Transverse colon (tissue), 4 donors: ENCODE measurements at regions of chr7 and their contacts with region 1.

Region 1: DNA sequence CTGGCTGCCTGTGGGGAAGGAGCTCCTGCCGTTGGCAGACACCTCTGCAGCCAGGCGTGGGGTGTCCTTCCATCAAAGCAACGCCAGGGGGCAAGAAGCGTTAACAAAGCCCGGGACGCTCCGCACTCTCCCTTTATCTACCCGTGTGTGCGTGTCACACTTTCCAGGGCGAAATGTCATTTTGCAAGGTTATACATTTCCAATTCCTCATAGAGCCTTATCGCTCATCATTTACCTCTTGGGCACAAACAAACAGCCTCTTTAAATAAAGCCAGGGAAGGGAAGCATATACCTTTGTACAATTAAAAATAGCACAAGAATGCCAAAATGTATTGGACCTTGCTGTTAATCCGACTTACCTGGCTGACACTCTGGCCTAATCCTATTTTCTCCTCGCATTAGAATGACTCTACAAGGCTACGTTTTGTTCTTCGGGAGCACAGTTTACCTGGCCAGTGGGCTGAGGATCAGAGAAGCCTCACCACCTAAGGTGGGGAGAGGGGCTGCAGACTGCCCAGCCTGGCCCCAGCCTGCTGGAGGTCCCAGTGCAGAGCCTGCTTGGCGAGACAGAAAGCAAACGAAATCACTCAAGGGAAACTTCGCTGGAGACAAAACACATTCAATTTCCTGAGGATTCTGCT is 77.6 kb upstream of the EN2 start:
- DNase-seq: peak; percentile 74
- H3K4me3 ChIP-seq: no peak overlapping the region
- H3K27ac ChIP-seq: no peak overlapping the region
- H3K4me1 ChIP-seq: peaks cover 14 to 59% (median 36%) of the 10 kb centered on the region in 4 donors
- H3K27me3 ChIP-seq: peaks cover 100% of the 10 kb centered on the region
- CTCF ChIP-seq: peak; percentile 69 to 82 (median 76)
- EP300 ChIP-seq: no peak
- POLR2A ChIP-seq: no peak

Region 2: DNA sequence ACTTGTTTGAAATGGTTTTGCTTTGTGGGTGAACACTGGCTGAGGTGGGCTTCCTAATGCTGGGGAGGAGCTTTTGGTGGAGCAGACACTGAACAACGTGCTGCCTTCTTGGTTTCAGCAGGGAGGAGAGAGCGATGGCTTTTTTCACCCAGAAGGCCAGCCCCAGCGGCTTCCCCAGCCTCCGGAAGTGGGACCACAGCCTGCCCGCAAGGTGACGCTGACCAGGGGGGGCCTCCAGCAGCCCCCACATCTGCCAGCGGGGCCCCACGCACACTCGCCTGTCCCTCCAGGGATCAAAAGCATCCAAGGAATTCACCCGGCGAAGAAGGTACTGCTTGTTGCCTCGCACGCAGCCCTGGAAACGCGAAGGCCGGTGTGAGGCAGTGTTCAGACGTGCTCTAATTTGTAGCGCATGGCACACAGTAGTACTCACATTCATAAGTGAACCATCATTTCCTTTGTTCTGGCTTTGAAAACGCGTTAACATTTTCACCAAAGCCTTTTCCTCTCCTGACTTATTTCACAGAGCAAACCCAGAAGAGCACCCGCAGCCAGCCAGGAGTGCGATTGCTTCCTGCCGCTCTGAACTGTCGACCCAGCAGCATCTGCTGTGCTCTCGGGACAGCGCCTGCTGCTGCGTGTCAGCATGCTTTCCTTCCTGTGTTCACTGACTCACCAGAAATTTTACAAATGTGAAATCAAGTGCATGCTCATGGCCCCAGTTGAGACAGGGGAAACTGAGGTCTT is 383.5 kb after region 1 on chr7:
- in situ Hi-C with region 1: loop called in 3 of 4 experiments (anchors 25 kb)
- intact Hi-C with region 1: no loop called
- DNase-seq: no peak
- H3K4me3 ChIP-seq: no peak overlapping the region
- H3K27ac ChIP-seq: peak overlapping the region; percentile 2 to 40 (median 25)
- H3K4me1 ChIP-seq: peaks cover 0 to 43% (median 6%) of the 10 kb centered on the region in 4 donors
- H3K27me3 ChIP-seq: no peaks in the 10 kb centered on the region
- CTCF ChIP-seq: no peak
- EP300 ChIP-seq: no peak
- POLR2A ChIP-seq: no peak